Naive thymus-derived CD4-positive, alpha-beta T cell (primary cell): ENCODE measurements at regions of chr1 and their contacts with region 1.

Region 1: GRCh38 chr1:167263819-167264464 is 43.3 kb downstream of the POU2F1 start:
- DNase-seq: peak in 6 of 9 donors; percentile 5 to 28 (median 14)
- ATAC-seq: peak; percentile 42
- H3K4me3 ChIP-seq: no peak overlapping the region
- H3K4me3 Mint-ChIP-seq: no peak overlapping the region
- H3K27ac ChIP-seq: no peak overlapping the region
- H3K27ac Mint-ChIP-seq: no peak overlapping the region
- H3K4me1 ChIP-seq: peaks cover 12 to 29% of the 10 kb centered on the region in 2 donors
- H3K4me1 Mint-ChIP-seq: peaks cover 20 to 40% (median 35%) of the 10 kb centered on the region in 7 donors
- H3K27me3 ChIP-seq: no peaks in the 10 kb centered on the region
- H3K27me3 Mint-ChIP-seq: no peaks in the 10 kb centered on the region

Region 2: DNA sequence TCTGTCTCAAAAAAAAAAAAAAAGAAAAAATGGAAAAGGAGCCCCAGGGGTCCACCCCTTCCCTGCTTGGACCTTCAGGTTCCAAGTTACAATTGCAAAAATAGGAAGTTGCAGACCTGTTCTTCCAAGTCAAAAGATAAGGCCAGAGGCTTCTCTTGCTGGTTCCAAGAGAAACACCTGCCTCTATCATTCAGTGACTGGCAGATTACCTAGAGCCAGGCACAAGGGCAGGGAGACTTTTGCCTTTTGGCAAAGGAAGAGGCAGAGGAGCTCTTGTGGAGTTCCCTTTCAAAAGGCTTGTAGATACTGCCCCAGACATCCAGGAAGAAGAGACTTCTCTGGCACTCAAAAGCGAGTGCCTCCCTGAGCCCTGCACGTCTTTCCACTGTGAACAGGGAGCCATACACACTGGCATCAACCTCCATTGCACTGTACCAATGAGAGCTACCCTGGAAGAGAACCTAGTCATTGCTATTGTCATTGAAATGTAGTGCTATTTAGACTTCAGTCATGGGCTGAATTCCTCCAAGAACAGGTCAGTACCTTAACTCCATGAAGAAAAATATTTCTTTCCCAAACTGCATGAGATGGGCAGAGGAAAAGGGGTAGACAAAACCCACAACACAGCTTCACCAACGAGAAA is 1998.6 kb before region 1 on chr1:
- CTCF ChIA-PET with region 1: no interaction called
- POLR2A ChIA-PET with region 1: no interaction called
- intact Hi-C with region 1: no loop called
- DNase-seq: no peak
- ATAC-seq: no peak
- H3K4me3 ChIP-seq: no peak overlapping the region
- H3K4me3 Mint-ChIP-seq: no peak overlapping the region
- H3K27ac ChIP-seq: no peak overlapping the region
- H3K27ac Mint-ChIP-seq: no peak overlapping the region
- H3K4me1 ChIP-seq: no peaks in the 10 kb centered on the region
- H3K4me1 Mint-ChIP-seq: no peaks in the 10 kb centered on the region
- H3K27me3 ChIP-seq: no peaks in the 10 kb centered on the region
- H3K27me3 Mint-ChIP-seq: peaks cover 0 to 27% (median 19%) of the 10 kb centered on the region in 5 donors

Region 3: GRCh38 chr1:166470014-166470413 is 793.9 kb before region 1 on chr1:
- CTCF ChIA-PET with region 1: no interaction called
- POLR2A ChIA-PET with region 1: no interaction called
- intact Hi-C with region 1: no loop called
- DNase-seq: no peak
- ATAC-seq: no peak
- H3K4me3 ChIP-seq: no peak overlapping the region
- H3K4me3 Mint-ChIP-seq: no peak overlapping the region
- H3K27ac ChIP-seq: no peak overlapping the region
- H3K27ac Mint-ChIP-seq: no peak overlapping the region
- H3K4me1 ChIP-seq: no peaks in the 10 kb centered on the region
- H3K4me1 Mint-ChIP-seq: no peaks in the 10 kb centered on the region
- H3K27me3 ChIP-seq: no peaks in the 10 kb centered on the region
- H3K27me3 Mint-ChIP-seq: peaks cover 10 to 67% (median 38%) of the 10 kb centered on the region in 5 donors

Region 4: GRCh38 chr1:167533851-167534300 is 269.9 kb after region 1 on chr1:
- CTCF ChIA-PET with region 1: interaction called, 48 read pairs
- POLR2A ChIA-PET with region 1: interaction called, 7 read pairs
- intact Hi-C with region 1: loop called (anchors 1 kb)
- DNase-seq: peak in 8 of 9 donors; percentile 50 to 72 (median 58)
- ATAC-seq: peak; percentile 87
- H3K4me3 ChIP-seq: no peak overlapping the region
- H3K4me3 Mint-ChIP-seq: no peak overlapping the region
- H3K27ac ChIP-seq: no peak overlapping the region
- H3K27ac Mint-ChIP-seq: peak overlapping the region in 1 of 9 donors; percentile 30
- H3K4me1 ChIP-seq: no peaks in the 10 kb centered on the region
- H3K4me1 Mint-ChIP-seq: peaks cover 0 to 11% (median 2%) of the 10 kb centered on the region in 7 donors
- H3K27me3 ChIP-seq: no peaks in the 10 kb centered on the region
- H3K27me3 Mint-ChIP-seq: peaks cover 0 to 3% (median 0%) of the 10 kb centered on the region in 5 donors

Region 5: DNA sequence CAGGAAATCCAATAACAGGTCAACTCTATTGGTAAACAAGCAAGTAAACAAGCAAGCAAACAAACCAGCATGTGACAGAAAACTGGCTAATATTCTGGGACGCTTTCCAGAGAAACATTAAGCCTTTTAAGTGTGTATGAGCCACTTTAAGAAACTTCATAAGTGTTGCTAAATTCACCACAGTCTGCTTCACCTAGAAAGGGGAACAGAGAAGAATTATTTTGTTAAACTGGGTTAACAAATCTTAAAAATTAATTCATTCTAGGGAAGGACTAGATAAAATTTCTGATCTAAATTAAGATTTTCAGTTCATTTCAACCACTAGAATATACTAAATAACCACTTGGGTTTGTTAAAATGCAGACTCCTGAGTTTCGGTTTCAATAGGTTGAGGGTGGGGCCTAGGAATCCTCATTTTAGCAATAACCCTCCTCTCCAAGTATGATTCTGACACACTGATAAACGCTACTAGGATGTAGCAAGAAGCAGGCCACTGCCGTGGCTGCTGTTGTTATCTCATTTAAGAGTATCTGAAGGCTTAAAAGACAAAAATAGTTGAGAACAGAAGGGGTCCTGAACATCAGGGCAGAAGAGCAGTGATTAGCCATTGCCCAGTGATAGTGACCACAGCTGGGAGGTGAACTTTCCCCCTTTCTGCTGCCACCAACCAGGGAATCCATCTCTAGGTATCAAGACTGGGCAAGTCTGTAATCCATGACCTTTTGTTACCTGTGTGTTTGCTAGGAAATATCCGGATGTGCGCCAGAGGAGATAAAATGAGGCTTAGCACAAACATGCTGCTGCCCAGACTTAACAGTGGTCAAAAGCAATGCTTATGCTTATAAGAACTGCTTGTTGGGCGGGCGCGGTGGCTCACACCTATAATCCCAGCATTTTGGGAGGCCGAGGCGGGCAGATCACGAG is 278.4 kb after region 1 on chr1:
- CTCF ChIA-PET with region 1: interaction called, 11 read pairs
- POLR2A ChIA-PET with region 1: interaction called, 12 read pairs
- intact Hi-C with region 1: loop called (anchors 1 to 2 kb)
- DNase-seq: no peak
- ATAC-seq: no peak
- H3K4me3 ChIP-seq: no peak overlapping the region
- H3K4me3 Mint-ChIP-seq: peak overlapping the region in 1 of 10 donors; percentile 15
- H3K27ac ChIP-seq: no peak overlapping the region
- H3K27ac Mint-ChIP-seq: peak overlapping the region in 2 of 9 donors; percentile 33 to 68
- H3K4me1 ChIP-seq: no peaks in the 10 kb centered on the region
- H3K4me1 Mint-ChIP-seq: peaks cover 3 to 56% (median 5%) of the 10 kb centered on the region in 7 donors
- H3K27me3 ChIP-seq: no peaks in the 10 kb centered on the region
- H3K27me3 Mint-ChIP-seq: no peaks in the 10 kb centered on the region

Region 6: GRCh38 chr1:168653567-168653966 is 1389.6 kb after region 1 on chr1:
- CTCF ChIA-PET with region 1: no interaction called
- POLR2A ChIA-PET with region 1: no interaction called
- intact Hi-C with region 1: no loop called
- DNase-seq: no peak
- ATAC-seq: no peak
- H3K4me3 ChIP-seq: no peak overlapping the region
- H3K4me3 Mint-ChIP-seq: no peak overlapping the region
- H3K27ac ChIP-seq: no peak overlapping the region
- H3K27ac Mint-ChIP-seq: no peak overlapping the region
- H3K4me1 ChIP-seq: no peaks in the 10 kb centered on the region
- H3K4me1 Mint-ChIP-seq: no peaks in the 10 kb centered on the region
- H3K27me3 ChIP-seq: no peaks in the 10 kb centered on the region
- H3K27me3 Mint-ChIP-seq: peaks cover 0 to 31% (median 5%) of the 10 kb centered on the region in 5 donors